OCI-LY7 (cell line): ENCODE measurements at regions of chr14 and their contacts with region 1.

Region 1: GRCh38 chr14:92135267-92135666 is 13.5 kb downstream of the CPSF2 start:
- DNase-seq: peak; percentile 13
- H3K4me3 ChIP-seq: no peak overlapping the region
- H3K27ac ChIP-seq: no peak overlapping the region
- H3K4me1 ChIP-seq: no peaks in the 10 kb centered on the region
- CTCF ChIP-seq: peak; percentile 72

Region 2: DNA sequence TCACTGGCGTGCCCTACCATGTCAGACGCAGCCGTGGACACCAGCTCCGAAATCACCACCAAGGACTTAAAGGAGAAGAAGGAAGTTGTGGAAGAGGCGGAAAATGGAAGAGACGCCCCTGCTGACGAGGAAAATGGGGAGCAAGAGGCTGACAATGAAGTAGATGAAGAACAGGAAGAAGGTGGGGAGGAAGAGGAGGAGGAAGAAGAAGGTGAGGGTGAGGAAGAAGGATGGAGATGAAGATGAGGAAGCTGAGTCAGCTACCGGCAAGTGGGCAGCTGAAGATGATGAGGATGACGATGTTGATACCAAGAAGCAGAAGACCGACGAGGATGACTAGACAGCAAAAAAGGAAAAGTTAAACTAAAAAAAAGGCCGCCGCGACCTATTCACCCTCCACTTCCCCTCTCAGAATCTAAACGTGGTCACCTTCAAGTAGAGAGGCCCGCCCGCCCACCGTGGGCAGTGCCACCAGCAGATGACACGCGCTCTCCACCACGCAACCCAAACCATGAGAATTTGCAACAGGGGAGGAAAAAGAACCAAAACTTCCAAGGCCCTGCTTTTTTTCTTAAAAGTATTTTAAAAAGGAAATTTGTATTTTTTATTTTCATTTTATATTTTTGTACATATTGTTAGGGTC is 108.6 kb before region 1 on chr14:
- CTCF ChIA-PET with region 1: no interaction called
- POLR2A ChIA-PET with region 1: interaction called, 10 read pairs
- intact Hi-C with region 1: no loop called
- DNase-seq: no peak
- H3K4me3 ChIP-seq: no peak overlapping the region
- H3K27ac ChIP-seq: no peak overlapping the region
- H3K4me1 ChIP-seq: no peaks in the 10 kb centered on the region
- CTCF ChIP-seq: no peak

Region 3: GRCh38 chr14:92121670-92122350 is 13.5 kb before region 1 on chr14 and contains the starts of genes CPSF2 and NDUFB1:
- CTCF ChIA-PET with region 1: no interaction called
- POLR2A ChIA-PET with region 1: interaction called, 33 read pairs
- intact Hi-C with region 1: no loop called
- DNase-seq: peak; percentile 89
- H3K4me3 ChIP-seq: peak within 1 kb of the TSS; percentile 89
- H3K27ac ChIP-seq: peak within 1 kb of the TSS; percentile 61
- H3K4me1 ChIP-seq: peaks cover 16% of the 10 kb centered on the region
- CTCF ChIP-seq: no peak
- total RNA-seq, gene CPSF2: 40.0 and 46.8 TPM in 2 replicates
- total RNA-seq, gene NDUFB1: 230 and 320 TPM in 2 replicates

Region 4: GRCh38 chr14:92456215-92457015 is 321.1 kb after region 1 on chr14:
- CTCF ChIA-PET with region 1: no interaction called
- POLR2A ChIA-PET with region 1: no interaction called
- intact Hi-C with region 1: loop called (anchors 2 kb)
- DNase-seq: peak; percentile 57
- H3K4me3 ChIP-seq: no peak overlapping the region
- H3K27ac ChIP-seq: no peak overlapping the region
- H3K4me1 ChIP-seq: no peaks in the 10 kb centered on the region
- CTCF ChIP-seq: peak; percentile 69